ENCODE measurements at regions of chr1 and their contacts with region 1.

Region 1: GRCh38 chr1:212284744-212285684 is at the start of gene PPP2R5A:
- DNase-seq: peak; percentile 95 to 99 (median 99)
- ATAC-seq: peak; percentile 92
- H3K4me3 ChIP-seq: peak within 1 kb of the TSS; percentile 96
- H3K4me3 Mint-ChIP-seq: peak within 1 kb of the TSS; percentile 94 to 100 (median 98)
- H3K27ac ChIP-seq: peak within 1 kb of the TSS; percentile 96
- H3K27ac Mint-ChIP-seq: peak within 1 kb of the TSS; percentile 96 to 99 (median 98)
- H3K4me1 ChIP-seq: peaks cover 19 to 26% of the 10 kb centered on the region in 2 donors
- H3K4me1 Mint-ChIP-seq: peaks cover 21 to 49% (median 43%) of the 10 kb centered on the region in 7 donors
- H3K27me3 ChIP-seq: no peaks in the 10 kb centered on the region
- H3K27me3 Mint-ChIP-seq: peaks cover 0 to 6% (median 0%) of the 10 kb centered on the region in 5 donors
- total RNA-seq, gene PPP2R5A: 38.5 to 52.7 (median 49.8) TPM

Region 2: DNA sequence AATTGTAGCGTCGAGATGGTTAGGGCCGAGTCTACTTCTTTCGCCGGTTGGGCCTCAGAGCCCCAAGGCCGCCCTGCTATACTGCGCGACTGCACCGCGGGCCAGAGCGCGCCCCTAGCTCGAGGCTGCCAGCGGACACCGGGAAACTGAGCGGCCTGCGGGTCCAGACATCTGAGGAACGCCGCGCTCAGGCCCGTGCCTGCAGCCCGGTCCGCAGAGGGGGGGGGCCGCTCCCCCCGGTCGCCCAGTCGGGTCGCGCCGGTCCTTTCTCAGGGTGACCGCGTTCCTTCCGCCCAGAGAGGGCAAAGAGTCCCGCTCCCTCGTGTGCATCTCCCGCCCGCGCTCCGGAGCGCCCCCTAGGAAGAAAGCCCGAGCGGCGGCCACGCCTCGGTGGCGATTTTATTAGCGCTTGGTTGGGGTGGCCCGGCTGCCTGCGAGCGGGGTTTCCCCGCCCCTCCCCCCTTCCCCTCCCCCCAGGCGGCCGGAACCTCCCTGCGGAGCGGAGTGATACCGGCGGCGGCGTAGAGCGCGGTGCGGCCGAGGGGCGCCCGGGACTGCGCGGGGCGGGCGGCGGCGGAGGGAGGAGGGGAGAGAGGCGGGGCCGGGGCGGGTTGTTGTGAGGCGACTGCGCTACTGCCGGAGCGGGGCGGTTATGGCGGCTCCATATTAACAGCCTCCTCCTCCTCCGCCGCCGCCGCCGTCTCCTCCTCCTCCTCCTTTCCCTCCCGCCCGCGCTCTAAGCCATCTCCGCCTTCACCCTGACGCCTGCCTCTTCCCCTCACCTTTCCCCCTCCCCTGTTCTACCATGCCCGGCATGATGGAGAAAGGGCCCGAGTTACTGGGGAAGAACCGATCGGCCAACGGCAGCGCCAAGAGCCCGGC is 1026.0 kb before region 1 on chr1 and contains the start of gene RCOR3:
- CTCF ChIA-PET with region 1: no interaction called
- POLR2A ChIA-PET with region 1: no interaction called
- intact Hi-C with region 1: loop called in 1 of 2 experiments (anchors 5 kb)
- DNase-seq: peak; percentile 81 to 92 (median 88)
- ATAC-seq: peak; percentile 89
- H3K4me3 ChIP-seq: peak within 1 kb of the TSS; percentile 87
- H3K4me3 Mint-ChIP-seq: peak within 1 kb of the TSS; percentile 86 to 97 (median 92)
- H3K27ac ChIP-seq: peak within 1 kb of the TSS; percentile 89
- H3K27ac Mint-ChIP-seq: peak within 1 kb of the TSS; percentile 90 to 99 (median 93)
- H3K4me1 ChIP-seq: peaks cover 6 to 17% of the 10 kb centered on the region in 2 donors
- H3K4me1 Mint-ChIP-seq: peaks cover 17 to 33% (median 23%) of the 10 kb centered on the region in 7 donors
- H3K27me3 ChIP-seq: no peaks in the 10 kb centered on the region
- H3K27me3 Mint-ChIP-seq: no peaks in the 10 kb centered on the region
- total RNA-seq, gene RCOR3: 42.3 to 98.0 (median 82.8) TPM

Region 3: DNA sequence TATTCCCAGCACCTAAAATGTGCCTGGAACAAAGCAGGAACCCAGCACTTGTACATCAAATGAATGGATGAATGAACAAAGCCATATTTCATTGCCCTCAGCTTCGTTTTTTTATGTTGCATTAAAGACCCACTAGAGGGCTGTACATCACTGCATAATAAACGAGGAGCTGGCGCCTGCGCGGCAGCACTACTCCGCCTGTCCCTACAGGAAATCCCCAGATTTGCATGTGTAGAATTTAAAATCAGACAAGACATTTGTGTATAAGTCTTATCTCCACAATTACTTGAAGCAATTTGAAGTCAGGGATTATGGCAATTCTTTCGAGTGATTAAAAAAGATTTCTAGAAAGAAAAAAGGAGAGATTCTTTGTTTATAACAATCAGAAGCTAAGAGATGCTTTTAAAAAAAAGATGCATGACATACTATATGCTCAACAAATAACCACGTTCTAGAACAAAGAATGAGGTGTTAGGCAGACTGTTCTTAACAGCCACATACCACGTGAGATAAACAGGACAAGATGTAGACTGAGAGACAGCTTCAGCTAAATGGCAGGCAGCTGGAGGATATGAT is 604.2 kb before region 1 on chr1:
- CTCF ChIA-PET with region 1: interaction called, 3 read pairs
- POLR2A ChIA-PET with region 1: no interaction called
- intact Hi-C with region 1: loop called (anchors 1 to 2 kb)
- DNase-seq: peak; percentile 44 to 85 (median 78)
- ATAC-seq: peak; percentile 98
- H3K4me3 ChIP-seq: no peak overlapping the region
- H3K4me3 Mint-ChIP-seq: peak overlapping the region in 9 of 10 donors; percentile 19 to 59 (median 50)
- H3K27ac ChIP-seq: peak overlapping the region; percentile 66
- H3K27ac Mint-ChIP-seq: peak overlapping the region; percentile 79 to 95 (median 87)
- H3K4me1 ChIP-seq: peaks cover 10 to 11% of the 10 kb centered on the region in 2 donors
- H3K4me1 Mint-ChIP-seq: peaks cover 9 to 22% (median 14%) of the 10 kb centered on the region in 7 donors
- H3K27me3 ChIP-seq: no peaks in the 10 kb centered on the region
- H3K27me3 Mint-ChIP-seq: no peaks in the 10 kb centered on the region

Region 4: GRCh38 chr1:212070720-212071302 is 214.2 kb before region 1 on chr1:
- CTCF ChIA-PET with region 1: interaction called, 50 read pairs
- POLR2A ChIA-PET with region 1: interaction called, 14 read pairs
- intact Hi-C with region 1: loop called in 1 of 2 experiments (anchors 1 kb)
- DNase-seq: peak in 7 of 9 donors; percentile 11 to 63 (median 47)
- ATAC-seq: peak; percentile 66
- H3K4me3 ChIP-seq: no peak overlapping the region
- H3K4me3 Mint-ChIP-seq: no peak overlapping the region
- H3K27ac ChIP-seq: no peak overlapping the region
- H3K27ac Mint-ChIP-seq: no peak overlapping the region
- H3K4me1 ChIP-seq: no peaks in the 10 kb centered on the region
- H3K4me1 Mint-ChIP-seq: peaks cover 0 to 7% (median 0%) of the 10 kb centered on the region in 7 donors
- H3K27me3 ChIP-seq: no peaks in the 10 kb centered on the region
- H3K27me3 Mint-ChIP-seq: no peaks in the 10 kb centered on the region

Region 5: DNA sequence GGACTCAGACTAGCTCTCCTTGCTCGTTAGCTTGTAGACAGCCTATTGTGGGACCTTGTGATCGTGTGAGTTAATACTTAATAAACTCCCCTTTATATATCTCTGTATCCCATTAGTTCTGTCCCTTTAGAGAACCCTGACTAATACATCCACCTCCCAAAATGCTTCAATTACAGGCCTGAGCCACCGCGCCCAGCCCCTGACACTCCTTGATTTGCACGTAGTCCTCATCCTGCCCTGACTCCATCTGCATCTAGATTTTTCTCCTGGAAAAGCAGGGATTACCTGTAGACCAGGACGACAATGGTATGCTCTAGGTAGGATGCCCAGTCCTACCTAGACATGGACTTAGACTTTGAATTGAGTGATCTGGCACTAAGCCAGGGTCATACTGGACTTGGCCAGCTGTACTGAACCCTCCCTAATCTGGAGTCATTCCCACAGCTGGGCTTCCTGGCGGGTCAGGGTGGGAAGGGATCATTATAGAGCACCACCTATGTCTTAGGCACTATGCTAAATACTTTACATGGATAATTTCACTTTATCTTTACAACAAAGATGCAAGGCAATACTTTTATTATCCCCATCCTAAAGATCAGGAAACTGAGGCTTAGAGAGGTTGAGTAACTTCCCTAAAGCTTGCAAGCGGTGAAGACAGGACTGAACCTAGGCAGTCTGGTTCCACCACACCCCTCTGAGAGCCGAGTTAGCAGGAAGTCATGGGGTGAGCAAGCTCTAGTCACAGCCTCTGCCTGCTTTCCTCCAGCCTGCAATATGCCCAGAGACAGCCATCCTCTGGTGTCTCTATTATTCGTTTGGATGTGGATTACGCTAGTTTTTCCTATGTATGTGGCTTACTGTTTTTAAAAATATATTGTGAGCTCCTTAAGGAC is 160.1 kb before region 1 on chr1:
- CTCF ChIA-PET with region 1: no interaction called
- POLR2A ChIA-PET with region 1: no interaction called
- intact Hi-C with region 1: no loop called
- DNase-seq: peak in 3 of 9 donors; percentile 13 to 30 (median 14)
- ATAC-seq: peak; percentile 66
- H3K4me3 ChIP-seq: no peak overlapping the region
- H3K4me3 Mint-ChIP-seq: no peak overlapping the region
- H3K27ac ChIP-seq: no peak overlapping the region
- H3K27ac Mint-ChIP-seq: peak overlapping the region in 1 of 9 donors; percentile 47
- H3K4me1 ChIP-seq: peaks cover 0 to 6% of the 10 kb centered on the region in 2 donors
- H3K4me1 Mint-ChIP-seq: peaks cover 0 to 26% (median 9%) of the 10 kb centered on the region in 7 donors
- H3K27me3 ChIP-seq: no peaks in the 10 kb centered on the region
- H3K27me3 Mint-ChIP-seq: no peaks in the 10 kb centered on the region

Region 6: GRCh38 chr1:212256369-212256768 is 28.6 kb before region 1 on chr1:
- CTCF ChIA-PET with region 1: no interaction called
- POLR2A ChIA-PET with region 1: interaction called, 32 read pairs
- intact Hi-C with region 1: loop called (anchors 1 kb)
- DNase-seq: peak in 8 of 9 donors; percentile 30 to 73 (median 64)
- ATAC-seq: peak; percentile 87
- H3K4me3 ChIP-seq: peak overlapping the region; percentile 31
- H3K4me3 Mint-ChIP-seq: peak overlapping the region; percentile 67 to 89 (median 82)
- H3K27ac ChIP-seq: no peak overlapping the region
- H3K27ac Mint-ChIP-seq: peak overlapping the region; percentile 36 to 88 (median 80)
- H3K4me1 ChIP-seq: peaks cover 56 to 60% of the 10 kb centered on the region in 2 donors
- H3K4me1 Mint-ChIP-seq: peaks cover 47 to 89% (median 76%) of the 10 kb centered on the region in 7 donors
- H3K27me3 ChIP-seq: no peaks in the 10 kb centered on the region
- H3K27me3 Mint-ChIP-seq: no peaks in the 10 kb centered on the region

Region 7: DNA sequence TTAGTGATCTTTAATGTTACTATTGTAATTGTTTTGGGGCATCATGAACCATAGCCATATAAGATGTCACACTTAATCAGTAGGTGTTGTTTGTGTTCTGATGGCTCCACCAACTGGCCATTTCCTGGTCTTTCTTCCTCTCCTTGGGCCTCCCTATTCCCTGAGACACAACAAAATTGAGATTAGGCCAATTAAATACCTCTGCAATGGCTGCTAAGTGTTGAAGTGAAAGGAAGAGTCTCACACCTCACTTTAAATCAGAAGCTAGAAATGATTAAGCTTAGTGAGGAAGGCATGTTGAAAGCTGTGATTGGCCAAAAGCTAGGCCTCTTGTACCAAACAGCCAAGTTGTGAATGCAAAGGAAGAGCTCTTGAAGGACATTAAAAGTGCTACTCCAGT is 30.9 kb after region 1 on chr1:
- CTCF ChIA-PET with region 1: no interaction called
- POLR2A ChIA-PET with region 1: no interaction called
- intact Hi-C with region 1: no loop called
- DNase-seq: no peak
- ATAC-seq: no peak
- H3K4me3 ChIP-seq: no peak overlapping the region
- H3K4me3 Mint-ChIP-seq: peak overlapping the region in 6 of 10 donors; percentile 6 to 57 (median 37)
- H3K27ac ChIP-seq: no peak overlapping the region
- H3K27ac Mint-ChIP-seq: peak overlapping the region in 7 of 9 donors; percentile 19 to 79 (median 39)
- H3K4me1 ChIP-seq: peaks cover 0 to 6% of the 10 kb centered on the region in 2 donors
- H3K4me1 Mint-ChIP-seq: peaks cover 19 to 59% (median 47%) of the 10 kb centered on the region in 7 donors
- H3K27me3 ChIP-seq: no peaks in the 10 kb centered on the region
- H3K27me3 Mint-ChIP-seq: no peaks in the 10 kb centered on the region

Region 8: GRCh38 chr1:212432706-212433576 is 147.9 kb after region 1 on chr1 and contains the start of gene NENF:
- CTCF ChIA-PET with region 1: no interaction called
- POLR2A ChIA-PET with region 1: interaction called, 3 read pairs
- intact Hi-C with region 1: loop called (anchors 1 kb)
- DNase-seq: peak; percentile 53 to 85 (median 72)
- ATAC-seq: peak; percentile 99
- H3K4me3 ChIP-seq: peak within 1 kb of the TSS; percentile 62
- H3K4me3 Mint-ChIP-seq: peak within 1 kb of the TSS; percentile 77 to 87 (median 82)
- H3K27ac ChIP-seq: peak within 1 kb of the TSS; percentile 77
- H3K27ac Mint-ChIP-seq: peak within 1 kb of the TSS; percentile 42 to 86 (median 63)
- H3K4me1 ChIP-seq: peaks cover 9 to 21% of the 10 kb centered on the region in 2 donors
- H3K4me1 Mint-ChIP-seq: peaks cover 18 to 44% (median 30%) of the 10 kb centered on the region in 7 donors
- H3K27me3 ChIP-seq: no peaks in the 10 kb centered on the region
- H3K27me3 Mint-ChIP-seq: peaks cover 0 to 4% (median 0%) of the 10 kb centered on the region in 5 donors
- total RNA-seq, gene NENF: 16.0 to 23.5 (median 21.0) TPM

Region 9: GRCh38 chr1:212857992-212858460 is 573.0 kb after region 1 on chr1 and contains the start of gene FLVCR1:
- CTCF ChIA-PET with region 1: no interaction called
- POLR2A ChIA-PET with region 1: no interaction called
- intact Hi-C with region 1: loop called in 1 of 2 experiments (anchors 5 kb)
- DNase-seq: peak; percentile 74 to 96 (median 80)
- ATAC-seq: peak; percentile 99
- H3K4me3 ChIP-seq: peak within 1 kb of the TSS; percentile 72
- H3K4me3 Mint-ChIP-seq: peak within 1 kb of the TSS in 6 of 10 donors; percentile 95 to 97 (median 96)
- H3K27ac ChIP-seq: peak within 1 kb of the TSS; percentile 68
- H3K27ac Mint-ChIP-seq: peak within 1 kb of the TSS; percentile 77 to 96 (median 89)
- H3K4me1 ChIP-seq: peaks cover 9 to 16% of the 10 kb centered on the region in 2 donors
- H3K4me1 Mint-ChIP-seq: peaks cover 9 to 34% (median 21%) of the 10 kb centered on the region in 7 donors
- H3K27me3 ChIP-seq: no peaks in the 10 kb centered on the region
- H3K27me3 Mint-ChIP-seq: no peaks in the 10 kb centered on the region
- total RNA-seq, gene FLVCR1: 7.4 to 12.2 (median 8.2) TPM